Caco-2 (cell line): ENCODE measurements at regions of chr17 and their contacts with region 1.

Region 1: GRCh38 chr17:72502371-72503341 is 381.8 kb downstream of the SOX9 start:
- DNase-seq: peak; percentile 66
- H3K4me3 ChIP-seq: no peak overlapping the region
- H3K4me3 Mint-ChIP-seq: peak overlapping the region; percentile 8
- H3K27ac Mint-ChIP-seq: peak overlapping the region; percentile 88
- H3K4me1 ChIP-seq: peaks cover 21% of the 10 kb centered on the region
- H3K4me1 Mint-ChIP-seq: peaks cover 23% of the 10 kb centered on the region
- H3K27me3 ChIP-seq: no peaks in the 10 kb centered on the region
- H3K27me3 Mint-ChIP-seq: no peaks in the 10 kb centered on the region
- CTCF ChIP-seq: no peak

Region 2: DNA sequence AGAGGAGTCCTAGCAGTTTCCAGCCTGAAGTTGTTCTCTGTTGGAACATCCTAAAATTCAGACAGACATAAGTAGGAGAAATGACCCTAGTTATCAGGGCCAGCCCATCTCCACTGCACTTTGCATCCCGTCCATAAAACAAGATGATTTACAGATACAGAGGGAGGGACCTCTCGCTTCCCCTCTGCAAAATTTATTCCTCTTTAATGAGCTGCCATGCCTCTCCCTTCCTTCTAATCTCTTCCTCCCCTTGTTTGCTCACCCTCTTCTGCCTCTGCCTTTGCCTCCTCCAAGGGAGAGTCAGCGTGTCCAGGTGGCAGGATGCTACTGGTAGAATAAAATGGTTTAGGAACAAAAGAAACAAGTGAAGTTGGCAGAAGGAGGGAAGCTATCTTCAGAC is 30.6 kb before region 1 on chr17:
- CTCF ChIA-PET with region 1: no interaction called
- POLR2A ChIA-PET with region 1: no interaction called
- intact Hi-C with region 1: loop called (anchors 1 kb)
- DNase-seq: no peak
- H3K4me3 ChIP-seq: no peak overlapping the region
- H3K4me3 Mint-ChIP-seq: no peak overlapping the region
- H3K27ac Mint-ChIP-seq: no peak overlapping the region
- H3K4me1 ChIP-seq: peaks cover 51% of the 10 kb centered on the region
- H3K4me1 Mint-ChIP-seq: peaks cover 11% of the 10 kb centered on the region
- H3K27me3 ChIP-seq: no peaks in the 10 kb centered on the region
- H3K27me3 Mint-ChIP-seq: no peaks in the 10 kb centered on the region
- CTCF ChIP-seq: no peak

Region 3: GRCh38 chr17:72515291-72516065 is 12.8 kb after region 1 on chr17:
- CTCF ChIA-PET with region 1: no interaction called
- POLR2A ChIA-PET with region 1: no interaction called
- intact Hi-C with region 1: loop called (anchors 1 kb)
- DNase-seq: no peak
- H3K4me3 ChIP-seq: no peak overlapping the region
- H3K4me3 Mint-ChIP-seq: no peak overlapping the region
- H3K27ac Mint-ChIP-seq: no peak overlapping the region
- H3K4me1 ChIP-seq: peaks cover 46% of the 10 kb centered on the region
- H3K4me1 Mint-ChIP-seq: peaks cover 27% of the 10 kb centered on the region
- H3K27me3 ChIP-seq: no peaks in the 10 kb centered on the region
- H3K27me3 Mint-ChIP-seq: no peaks in the 10 kb centered on the region
- CTCF ChIP-seq: no peak